Lower leg skin (tissue), 4 donors: ENCODE measurements at regions of chr16 and their contacts with region 1.

Region 1: GRCh38 chr16:53378138-53378537 is 56.1 kb upstream of the RBL2 start:
- DNase-seq: no peak
- H3K4me3 ChIP-seq: no peak overlapping the region
- CTCF ChIP-seq: no peak
- POLR2A ChIP-seq: no peak

Region 2: GRCh38 chr16:53433530-53433929 is 55.4 kb after region 1 on chr16:
- intact Hi-C with region 1: loop called (anchors 2 kb)
- DNase-seq: no peak
- H3K4me3 ChIP-seq: no peak overlapping the region
- CTCF ChIP-seq: no peak
- POLR2A ChIP-seq: no peak